Sciatic nerve (tissue), 2 donors: ENCODE measurements at regions of chr1 and their contacts with region 1.

Region 1: GRCh38 chr1:9289090-9289534 is 3.6 kb upstream of the SPSB1 start:
- DNase-seq: peak; percentile 87
- ATAC-seq: no peak

Region 2: GRCh38 chr1:9260059-9260766 is 28.9 kb before region 1 on chr1:
- intact Hi-C with region 1: no loop called
- DNase-seq: no peak
- ATAC-seq: no peak

Region 3: GRCh38 chr1:9350013-9350908 is 61.1 kb after region 1 on chr1:
- intact Hi-C with region 1: no loop called
- DNase-seq: no peak
- ATAC-seq: no peak

Region 4: GRCh38 chr1:9486466-9487140 is 197.5 kb after region 1 on chr1:
- intact Hi-C with region 1: loop called (anchors 10 kb)
- DNase-seq: no peak
- ATAC-seq: no peak